ENCODE measurements at regions of chr1 and their contacts with region 1.

Region 1: DNA sequence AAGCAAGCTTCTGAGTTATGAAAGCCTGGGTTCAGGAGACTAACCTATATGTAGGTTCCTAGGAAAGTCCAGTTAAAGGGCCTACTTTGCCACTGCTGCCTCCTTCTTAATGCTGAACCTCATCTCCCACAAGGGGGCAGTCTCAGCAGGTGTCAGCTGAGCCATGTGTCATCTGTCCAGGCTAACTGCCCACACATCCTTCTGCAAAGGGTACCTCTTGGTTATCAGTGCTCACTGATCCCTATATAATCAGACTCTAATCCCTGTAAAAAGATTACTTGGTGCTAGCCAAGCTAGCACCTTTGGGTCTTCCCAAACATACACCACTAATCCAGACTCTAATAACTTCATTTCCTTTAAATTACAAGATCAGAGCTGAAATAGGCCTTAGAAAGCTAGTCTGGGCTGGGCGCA is 9.0 kb downstream of the PRDX1 start:
- DNase-seq: peak in 8 of 9 experiments; percentile 35 to 77 (median 58)
- ATAC-seq: peak; percentile 65
- H3K4me3 ChIP-seq: no peak overlapping the region
- H3K4me3 Mint-ChIP-seq: no peak overlapping the region
- H3K27ac ChIP-seq: no peak overlapping the region
- H3K27ac Mint-ChIP-seq: peak overlapping the region; percentile 4
- H3K4me1 ChIP-seq: no peaks in the 10 kb centered on the region
- H3K4me1 Mint-ChIP-seq: peaks cover 2% of the 10 kb centered on the region
- H3K27me3 ChIP-seq: no peaks in the 10 kb centered on the region
- H3K27me3 Mint-ChIP-seq: no peaks in the 10 kb centered on the region
- CTCF ChIP-seq: peak; percentile 61

Region 2: GRCh38 chr1:45543581-45544417 is 31.2 kb after region 1 on chr1:
- CTCF ChIA-PET with region 1: interaction called, 15 read pairs
- POLR2A ChIA-PET with region 1: no interaction called
- intact Hi-C with region 1: no loop called
- DNase-seq: peak; percentile 35 to 95 (median 70)
- ATAC-seq: peak; percentile 96
- H3K4me3 ChIP-seq: peak overlapping the region in 1 of 2 experiments; percentile 10
- H3K4me3 Mint-ChIP-seq: peak overlapping the region; percentile 33
- H3K27ac ChIP-seq: peak overlapping the region in 1 of 2 experiments; percentile 58
- H3K27ac Mint-ChIP-seq: peak overlapping the region; percentile 49
- H3K4me1 ChIP-seq: peaks cover 16% of the 10 kb centered on the region
- H3K4me1 Mint-ChIP-seq: peaks cover 21% of the 10 kb centered on the region
- H3K27me3 ChIP-seq: no peaks in the 10 kb centered on the region
- H3K27me3 Mint-ChIP-seq: no peaks in the 10 kb centered on the region
- CTCF ChIP-seq: no peak

Region 3: GRCh38 chr1:45557422-45557944 is 44.8 kb after region 1 on chr1:
- CTCF ChIA-PET with region 1: interaction called, 11 read pairs
- POLR2A ChIA-PET with region 1: no interaction called
- intact Hi-C with region 1: no loop called
- DNase-seq: no peak
- ATAC-seq: no peak
- H3K4me3 ChIP-seq: no peak overlapping the region
- H3K4me3 Mint-ChIP-seq: no peak overlapping the region
- H3K27ac ChIP-seq: no peak overlapping the region
- H3K27ac Mint-ChIP-seq: no peak overlapping the region
- H3K4me1 ChIP-seq: peaks cover 2% of the 10 kb centered on the region
- H3K4me1 Mint-ChIP-seq: peaks cover 7% of the 10 kb centered on the region
- H3K27me3 ChIP-seq: no peaks in the 10 kb centered on the region
- H3K27me3 Mint-ChIP-seq: no peaks in the 10 kb centered on the region
- CTCF ChIP-seq: no peak

Region 4: GRCh38 chr1:45569962-45570581 is 57.4 kb after region 1 on chr1:
- CTCF ChIA-PET with region 1: interaction called, 132 read pairs
- POLR2A ChIA-PET with region 1: no interaction called
- intact Hi-C with region 1: loop called (anchors 1 kb)
- DNase-seq: peak; percentile 33 to 83 (median 72)
- ATAC-seq: peak; percentile 99
- H3K4me3 ChIP-seq: no peak overlapping the region
- H3K4me3 Mint-ChIP-seq: no peak overlapping the region
- H3K27ac ChIP-seq: no peak overlapping the region
- H3K27ac Mint-ChIP-seq: peak overlapping the region; percentile 22
- H3K4me1 ChIP-seq: no peaks in the 10 kb centered on the region
- H3K4me1 Mint-ChIP-seq: no peaks in the 10 kb centered on the region
- H3K27me3 ChIP-seq: no peaks in the 10 kb centered on the region
- H3K27me3 Mint-ChIP-seq: no peaks in the 10 kb centered on the region
- CTCF ChIP-seq: peak; percentile 92

Region 5: GRCh38 chr1:45750298-45751038 is 237.8 kb after region 1 on chr1 and contains the start of gene IPP:
- CTCF ChIA-PET with region 1: no interaction called
- POLR2A ChIA-PET with region 1: no interaction called
- intact Hi-C with region 1: loop called in 1 of 2 experiments (anchors 2 kb)
- DNase-seq: peak; percentile 73 to 97 (median 90)
- ATAC-seq: peak; percentile 90
- H3K4me3 ChIP-seq: peak within 1 kb of the TSS; percentile 82 to 90
- H3K4me3 Mint-ChIP-seq: peak within 1 kb of the TSS; percentile 97
- H3K27ac ChIP-seq: peak within 1 kb of the TSS; percentile 83 to 99
- H3K27ac Mint-ChIP-seq: peak within 1 kb of the TSS; percentile 100
- H3K4me1 ChIP-seq: peaks cover 17% of the 10 kb centered on the region
- H3K4me1 Mint-ChIP-seq: peaks cover 41% of the 10 kb centered on the region
- H3K27me3 ChIP-seq: no peaks in the 10 kb centered on the region
- H3K27me3 Mint-ChIP-seq: no peaks in the 10 kb centered on the region
- CTCF ChIP-seq: no peak
- total RNA-seq, gene IPP: 4.9 to 5.6 TPM

Region 6: GRCh38 chr1:45883633-45884032 is 371.0 kb after region 1 on chr1:
- CTCF ChIA-PET with region 1: no interaction called
- POLR2A ChIA-PET with region 1: no interaction called
- intact Hi-C with region 1: loop called in 1 of 2 experiments (anchors 2 kb)
- DNase-seq: no peak
- ATAC-seq: no peak
- H3K4me3 ChIP-seq: no peak overlapping the region
- H3K4me3 Mint-ChIP-seq: no peak overlapping the region
- H3K27ac ChIP-seq: no peak overlapping the region
- H3K27ac Mint-ChIP-seq: no peak overlapping the region
- H3K4me1 ChIP-seq: no peaks in the 10 kb centered on the region
- H3K4me1 Mint-ChIP-seq: no peaks in the 10 kb centered on the region
- H3K27me3 ChIP-seq: no peaks in the 10 kb centered on the region
- H3K27me3 Mint-ChIP-seq: no peaks in the 10 kb centered on the region
- CTCF ChIP-seq: no peak

Region 7: DNA sequence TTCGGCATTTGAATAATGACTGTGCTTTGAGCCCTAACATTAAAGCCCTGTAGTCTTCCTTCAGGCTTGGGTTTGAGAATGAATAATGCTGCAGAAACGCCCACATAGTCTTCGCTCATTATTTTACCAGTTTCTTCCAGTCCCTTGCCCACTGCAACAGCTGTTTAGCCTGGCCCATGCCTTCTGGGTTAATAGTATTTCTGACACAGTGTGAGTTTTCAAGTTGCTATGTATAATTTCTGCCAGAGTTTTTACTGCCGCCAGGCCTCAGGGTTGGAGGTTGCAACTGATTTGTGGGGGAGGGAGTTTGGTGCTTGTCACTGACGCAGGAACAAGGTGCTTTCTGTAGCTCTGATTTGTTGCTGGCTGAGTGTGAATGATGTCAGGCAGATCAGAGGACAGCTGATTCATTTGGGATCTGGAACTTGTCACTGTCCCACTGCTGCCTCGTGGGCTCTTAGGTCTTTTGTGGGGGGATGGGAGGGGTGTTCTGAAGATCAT is 400.6 kb after region 1 on chr1:
- CTCF ChIA-PET with region 1: no interaction called
- POLR2A ChIA-PET with region 1: no interaction called
- intact Hi-C with region 1: no loop called
- DNase-seq: peak in 1 of 9 experiments; percentile 14
- ATAC-seq: no peak
- H3K4me3 ChIP-seq: no peak overlapping the region
- H3K4me3 Mint-ChIP-seq: no peak overlapping the region
- H3K27ac ChIP-seq: no peak overlapping the region
- H3K27ac Mint-ChIP-seq: no peak overlapping the region
- H3K4me1 ChIP-seq: no peaks in the 10 kb centered on the region
- H3K4me1 Mint-ChIP-seq: no peaks in the 10 kb centered on the region
- H3K27me3 ChIP-seq: no peaks in the 10 kb centered on the region
- H3K27me3 Mint-ChIP-seq: no peaks in the 10 kb centered on the region
- CTCF ChIP-seq: no peak